HAP-1 (cell line): ENCODE measurements at regions of chr1 and their contacts with region 1.

Region 1: GRCh38 chr1:154479764-154480421 is 22.1 kb upstream of the TDRD10 start:
- DNase-seq: peak; percentile 81 to 82
- H3K4me3 ChIP-seq: no peak overlapping the region
- H3K4me1 ChIP-seq: no peaks in the 10 kb centered on the region
- H3K27me3 ChIP-seq: no peaks in the 10 kb centered on the region

Region 2: DNA sequence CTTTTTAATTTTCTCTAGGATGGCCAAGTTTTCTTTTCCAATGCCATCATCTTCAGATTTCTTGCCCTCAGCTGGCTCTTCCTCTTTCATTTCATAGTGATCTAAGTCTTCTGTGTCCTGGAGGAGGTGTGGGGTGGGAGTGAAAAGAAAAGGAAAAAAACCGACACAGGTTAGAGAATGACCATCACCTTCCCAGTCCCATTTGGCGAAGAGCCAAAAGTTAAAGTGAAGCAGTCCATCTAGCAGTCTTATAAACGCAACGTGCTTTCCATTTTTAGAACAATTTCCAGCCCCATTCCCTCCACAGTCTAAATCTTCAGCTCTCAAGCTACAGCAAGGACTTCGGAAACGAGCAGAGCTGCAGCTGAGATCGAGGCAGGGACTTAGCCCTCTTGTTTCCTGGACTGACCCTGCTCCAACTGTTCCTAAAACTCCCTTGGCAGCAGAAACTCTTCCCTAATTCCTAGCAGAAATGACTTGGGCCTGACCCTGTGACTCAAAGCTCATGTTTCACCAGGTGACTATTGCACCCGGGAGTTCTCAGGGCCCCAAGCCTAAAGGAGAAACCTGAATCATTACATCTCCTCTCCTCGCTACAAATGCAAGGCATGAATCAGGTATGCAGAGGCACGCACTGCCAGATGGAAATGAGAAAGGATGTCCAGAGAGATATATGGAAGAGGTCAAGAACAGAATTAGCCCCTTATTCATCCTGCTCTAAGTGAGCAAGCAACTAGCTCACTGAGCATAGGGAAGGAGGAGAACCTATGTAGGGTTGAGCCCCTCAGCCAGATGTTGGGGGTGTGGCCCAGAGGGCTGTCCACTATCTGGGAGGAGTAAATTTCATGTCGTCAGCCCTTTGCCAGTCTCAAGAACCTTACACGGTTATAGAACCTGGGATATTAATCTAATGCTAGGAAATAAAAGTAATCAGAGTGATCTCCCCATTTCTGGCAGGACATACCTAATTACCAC is 73.5 kb after region 1 on chr1:
- in situ Hi-C with region 1: loop called (anchors 5 kb)
- DNase-seq: no peak
- H3K4me3 ChIP-seq: no peak overlapping the region
- H3K4me1 ChIP-seq: peaks cover 8% of the 10 kb centered on the region
- H3K27me3 ChIP-seq: no peaks in the 10 kb centered on the region